Activated naive CD4-positive, alpha-beta T cell treated with anti-CD3 and anti-CD28 coated beads for 36 hours (primary cell): ENCODE measurements at regions of chr11 and their contacts with region 1.

Region 1: GRCh38 chr11:10540923-10541560 is at the start of gene RNF141:
- DNase-seq: peak; percentile 96
- H3K4me3 Mint-ChIP-seq: peak within 1 kb of the TSS; percentile 86
- H3K27ac Mint-ChIP-seq: no peak within 1 kb of the TSS
- H3K4me1 Mint-ChIP-seq: peaks cover 21% of the 10 kb centered on the region
- H3K27me3 Mint-ChIP-seq: no peaks in the 10 kb centered on the region
- total RNA-seq, gene RNF141: 20.9 to 21.8 TPM

Region 2: DNA sequence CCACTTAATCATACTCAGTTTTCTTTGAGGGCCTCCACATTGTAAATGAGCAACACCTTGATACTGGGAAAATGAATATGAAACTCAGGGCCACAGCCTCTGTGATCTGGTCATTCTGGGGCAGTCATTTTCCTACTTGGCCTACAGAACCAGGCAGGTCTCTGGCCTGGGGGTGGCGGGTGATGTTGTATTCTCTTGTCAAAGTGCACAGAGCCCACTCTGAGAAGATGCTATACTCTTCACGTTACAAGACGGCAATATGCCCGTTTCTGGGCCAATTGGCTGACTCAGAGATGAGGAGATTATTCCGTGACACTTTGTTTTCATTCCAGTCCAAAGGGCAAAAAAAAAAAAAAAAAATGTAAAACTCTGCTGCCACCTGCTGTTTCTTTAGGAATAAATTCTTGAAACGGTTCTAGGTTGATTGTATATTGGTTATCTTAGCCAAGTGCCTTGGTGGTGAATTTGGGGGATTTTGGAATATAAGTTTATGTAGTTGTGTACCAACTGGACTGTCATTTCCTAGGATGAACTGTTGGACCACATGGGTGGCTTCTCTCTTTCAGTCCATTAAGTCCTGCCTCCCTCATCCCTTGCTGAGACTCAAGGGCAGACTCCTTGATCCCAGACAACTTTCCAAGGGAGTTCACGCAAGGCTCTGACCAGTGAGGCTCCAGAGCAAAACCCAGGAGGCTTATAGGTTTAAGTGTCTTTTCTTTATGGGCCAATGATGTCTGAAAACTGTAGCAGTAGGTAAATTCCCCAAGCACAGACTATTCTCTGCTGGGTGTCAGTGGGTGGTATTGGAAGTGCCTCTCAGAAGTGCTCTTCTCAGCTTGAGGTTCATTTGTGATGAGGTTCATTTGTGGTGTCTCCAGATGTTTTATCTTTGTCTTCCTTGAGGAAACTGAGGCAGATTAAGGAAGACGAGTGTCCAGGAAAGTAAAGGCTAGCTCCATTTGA is 217.9 kb before region 1 on chr11:
- CTCF ChIA-PET with region 1: no interaction called
- intact Hi-C with region 1: no loop called
- DNase-seq: peak; percentile 69
- H3K4me3 Mint-ChIP-seq: peak overlapping the region; percentile 38
- H3K27ac Mint-ChIP-seq: peak overlapping the region; percentile 69
- H3K4me1 Mint-ChIP-seq: peaks cover 12% of the 10 kb centered on the region
- H3K27me3 Mint-ChIP-seq: no peaks in the 10 kb centered on the region

Region 3: DNA sequence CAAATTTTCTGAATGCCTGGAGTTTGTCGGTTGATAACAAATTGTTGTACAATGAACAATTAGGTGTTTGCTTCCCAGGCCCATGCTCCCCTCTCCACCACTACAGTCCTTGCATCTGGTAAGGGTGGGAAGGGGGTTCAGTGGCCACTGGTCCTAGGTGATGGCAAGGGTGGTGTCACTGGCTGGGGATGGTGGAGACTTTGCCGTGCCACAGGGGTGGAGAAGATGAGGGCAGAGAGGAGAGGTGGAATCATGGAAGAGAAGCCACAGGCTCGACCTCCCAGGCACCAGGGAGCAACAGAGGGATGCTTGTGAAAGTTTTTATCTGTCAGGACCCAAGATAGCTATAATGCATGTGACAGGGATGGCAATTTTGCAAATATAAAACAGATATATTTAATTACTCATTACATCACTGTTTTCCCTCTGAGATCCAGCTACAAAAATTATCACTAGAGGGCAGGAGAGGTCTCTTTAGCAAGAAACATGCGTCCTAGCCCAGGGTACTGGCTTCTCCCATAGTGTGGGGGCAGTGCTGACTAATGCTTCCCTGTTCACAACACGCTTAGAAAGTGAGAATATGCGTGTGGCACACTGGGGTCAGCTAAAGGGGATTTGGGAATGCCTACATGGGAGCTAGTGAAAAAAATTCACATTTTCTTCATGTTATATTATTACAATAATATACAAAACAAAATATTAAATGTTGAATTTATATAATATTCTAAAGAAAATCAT is 135.0 kb before region 1 on chr11:
- CTCF ChIA-PET with region 1: interaction called, 13 read pairs
- intact Hi-C with region 1: no loop called
- DNase-seq: peak; percentile 61
- H3K4me3 Mint-ChIP-seq: no peak overlapping the region
- H3K27ac Mint-ChIP-seq: no peak overlapping the region
- H3K4me1 Mint-ChIP-seq: peaks cover 15% of the 10 kb centered on the region
- H3K27me3 Mint-ChIP-seq: no peaks in the 10 kb centered on the region

Region 4: DNA sequence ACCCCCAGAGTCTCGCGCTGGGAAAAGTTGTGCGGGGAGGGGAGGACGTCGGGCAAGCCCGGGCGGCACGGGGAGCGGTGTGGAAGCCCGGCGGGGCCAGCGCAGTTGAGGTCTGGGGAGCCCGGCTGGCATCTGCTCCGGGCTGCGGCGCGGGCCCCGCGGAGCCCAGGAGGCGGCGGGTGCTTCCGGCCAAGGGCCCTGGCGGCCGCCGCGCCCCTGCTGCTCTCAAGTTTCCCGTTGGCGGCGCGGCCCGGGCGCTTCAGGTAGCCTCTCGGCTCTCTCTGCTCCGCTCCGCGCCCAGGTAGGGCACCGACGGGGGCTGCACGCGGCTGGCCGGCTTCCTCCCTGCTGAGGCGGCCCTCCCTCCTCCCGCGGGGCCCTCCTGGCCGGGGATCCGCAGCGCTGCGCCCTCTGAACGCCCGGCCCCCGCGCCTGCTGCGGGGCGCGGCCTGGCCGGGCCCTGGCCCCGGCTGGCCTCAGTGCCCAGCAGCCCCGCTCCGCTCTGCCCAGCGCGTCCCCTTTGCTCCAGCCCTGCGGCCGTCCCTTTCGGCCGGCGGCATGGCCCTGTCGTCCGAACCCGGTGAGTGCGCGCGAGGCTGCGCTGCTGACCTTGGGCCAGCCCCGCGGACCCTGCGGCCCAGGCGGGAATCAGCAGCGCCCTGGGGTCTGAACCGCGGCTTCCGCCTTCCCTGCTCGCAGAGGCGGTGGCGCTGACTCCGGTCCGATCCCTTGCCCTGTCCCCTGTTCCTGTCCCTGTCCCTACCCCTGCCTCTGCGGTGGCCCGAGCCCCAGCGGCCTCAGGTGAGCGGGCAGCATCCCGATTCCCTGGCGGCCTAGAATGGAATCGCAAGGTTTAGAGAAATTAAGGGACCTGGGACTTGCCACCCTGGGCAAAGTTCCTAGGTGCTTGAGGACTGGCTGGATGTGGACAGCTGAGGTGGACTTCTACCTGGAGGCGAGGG is 90.3 kb before region 1 on chr11:
- CTCF ChIA-PET with region 1: interaction called, 15 read pairs
- intact Hi-C with region 1: loop called (anchors 1 kb)
- DNase-seq: peak; percentile 67
- H3K4me3 Mint-ChIP-seq: peak overlapping the region; percentile 85
- H3K27ac Mint-ChIP-seq: peak overlapping the region; percentile 86
- H3K4me1 Mint-ChIP-seq: peaks cover 54% of the 10 kb centered on the region
- H3K27me3 Mint-ChIP-seq: no peaks in the 10 kb centered on the region

Region 5: GRCh38 chr11:10597877-10598351 is 56.9 kb after region 1 on chr11:
- CTCF ChIA-PET with region 1: no interaction called
- intact Hi-C with region 1: no loop called
- DNase-seq: no peak
- H3K4me3 Mint-ChIP-seq: no peak overlapping the region
- H3K27ac Mint-ChIP-seq: no peak overlapping the region
- H3K4me1 Mint-ChIP-seq: no peaks in the 10 kb centered on the region
- H3K27me3 Mint-ChIP-seq: peaks cover 3% of the 10 kb centered on the region

Region 6: GRCh38 chr11:10653926-10654810 is 113.1 kb after region 1 on chr11:
- CTCF ChIA-PET with region 1: interaction called, 5 read pairs
- intact Hi-C with region 1: loop called (anchors 1 kb)
- DNase-seq: peak; percentile 48
- H3K4me3 Mint-ChIP-seq: no peak overlapping the region
- H3K27ac Mint-ChIP-seq: no peak overlapping the region
- H3K4me1 Mint-ChIP-seq: peaks cover 5% of the 10 kb centered on the region
- H3K27me3 Mint-ChIP-seq: no peaks in the 10 kb centered on the region

Region 7: GRCh38 chr11:10750838-10751580 is 210.0 kb after region 1 on chr11 and contains the start of gene CTR9:
- CTCF ChIA-PET with region 1: no interaction called
- intact Hi-C with region 1: loop called (anchors 1 kb)
- DNase-seq: peak; percentile 95
- H3K4me3 Mint-ChIP-seq: peak within 1 kb of the TSS; percentile 93
- H3K27ac Mint-ChIP-seq: peak within 1 kb of the TSS; percentile 87
- H3K4me1 Mint-ChIP-seq: peaks cover 14% of the 10 kb centered on the region
- H3K27me3 Mint-ChIP-seq: no peaks in the 10 kb centered on the region
- total RNA-seq, gene CTR9: 28.7 to 29.7 TPM